ENCODE measurements at regions of chr1 and their contacts with region 1.

Region 1: GRCh38 chr1:159077120-159077961 is 775 bp upstream of the AIM2 start:
- DNase-seq: peak; percentile 99
- H3K4me3 Mint-ChIP-seq: peak overlapping the region; percentile 78
- H3K27ac Mint-ChIP-seq: peak overlapping the region; percentile 99
- H3K4me1 Mint-ChIP-seq: peaks cover 43% of the 10 kb centered on the region
- H3K27me3 Mint-ChIP-seq: peaks cover 2% of the 10 kb centered on the region

Region 2: GRCh38 chr1:158819461-158820443 is 257.6 kb before region 1 on chr1:
- CTCF ChIA-PET with region 1: no interaction called
- POLR2A ChIA-PET with region 1: interaction called, 24 read pairs
- DNase-seq: peak; percentile 33
- H3K4me3 Mint-ChIP-seq: peak overlapping the region; percentile 56
- H3K27ac Mint-ChIP-seq: peak overlapping the region; percentile 89
- H3K4me1 Mint-ChIP-seq: peaks cover 29% of the 10 kb centered on the region
- H3K27me3 Mint-ChIP-seq: no peaks in the 10 kb centered on the region

Region 3: GRCh38 chr1:158931055-158931737 is 146.1 kb before region 1 on chr1 and contains the start of gene PYHIN1:
- CTCF ChIA-PET with region 1: no interaction called
- POLR2A ChIA-PET with region 1: interaction called, 27 read pairs
- DNase-seq: peak; percentile 63
- H3K4me3 Mint-ChIP-seq: peak within 1 kb of the TSS; percentile 98
- H3K27ac Mint-ChIP-seq: peak within 1 kb of the TSS; percentile 95
- H3K4me1 Mint-ChIP-seq: peaks cover 36% of the 10 kb centered on the region
- H3K27me3 Mint-ChIP-seq: no peaks in the 10 kb centered on the region
- total RNA-seq, gene PYHIN1: 56.6 to 59.8 TPM

Region 4: DNA sequence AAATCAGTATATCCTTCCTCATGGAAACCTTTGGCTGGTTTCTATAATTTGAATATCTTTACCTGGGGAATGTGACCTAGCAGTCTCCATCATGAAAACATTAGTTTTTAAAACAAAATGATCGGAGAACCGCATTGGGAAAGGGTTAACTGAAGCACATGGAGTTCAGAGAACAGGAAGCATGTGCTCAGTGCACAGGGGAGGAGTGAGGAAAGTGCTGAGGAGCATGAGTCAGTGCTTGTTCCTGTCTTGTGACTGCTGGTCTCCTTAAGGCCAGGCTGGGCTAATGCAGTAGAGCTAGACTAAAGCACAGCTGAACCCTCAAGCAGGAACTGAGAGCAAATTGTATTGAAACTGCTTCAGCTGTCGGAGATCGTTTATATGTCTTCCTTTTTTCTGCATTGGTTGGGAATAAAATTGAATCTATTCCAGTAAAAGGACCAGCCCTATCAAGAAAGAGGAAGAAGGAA is 61.9 kb before region 1 on chr1:
- CTCF ChIA-PET with region 1: interaction called, 12 read pairs
- POLR2A ChIA-PET with region 1: interaction called, 260 read pairs
- DNase-seq: peak; percentile 82
- H3K4me3 Mint-ChIP-seq: peak overlapping the region; percentile 87
- H3K27ac Mint-ChIP-seq: peak overlapping the region; percentile 86
- H3K4me1 Mint-ChIP-seq: peaks cover 61% of the 10 kb centered on the region
- H3K27me3 Mint-ChIP-seq: no peaks in the 10 kb centered on the region

Region 5: GRCh38 chr1:159089184-159089791 is 11.9 kb after region 1 on chr1:
- CTCF ChIA-PET with region 1: interaction called, 47 read pairs
- POLR2A ChIA-PET with region 1: interaction called, 112 read pairs
- DNase-seq: no peak
- H3K4me3 Mint-ChIP-seq: no peak overlapping the region
- H3K27ac Mint-ChIP-seq: no peak overlapping the region
- H3K4me1 Mint-ChIP-seq: peaks cover 55% of the 10 kb centered on the region
- H3K27me3 Mint-ChIP-seq: no peaks in the 10 kb centered on the region

Region 6: GRCh38 chr1:159122005-159122621 is 44.8 kb after region 1 on chr1:
- CTCF ChIA-PET with region 1: no interaction called
- POLR2A ChIA-PET with region 1: no interaction called
- DNase-seq: no peak
- H3K4me3 Mint-ChIP-seq: no peak overlapping the region
- H3K27ac Mint-ChIP-seq: no peak overlapping the region
- H3K4me1 Mint-ChIP-seq: peaks cover 11% of the 10 kb centered on the region
- H3K27me3 Mint-ChIP-seq: peaks cover 32% of the 10 kb centered on the region